ENCODE measurements at regions of chr7 and their contacts with region 1.

Region 1: GRCh38 chr7:141533149-141533949 is 17.9 kb upstream of the AGK start:
- DNase-seq: peak; percentile 38
- H3K4me3 ChIP-seq: no peak overlapping the region
- H3K27ac ChIP-seq: no peak overlapping the region
- H3K4me1 ChIP-seq: no peaks in the 10 kb centered on the region
- H3K27me3 ChIP-seq: no peaks in the 10 kb centered on the region
- CTCF ChIP-seq: peak; percentile 94 to 99

Region 2: GRCh38 chr7:140673063-140673773 is 860.1 kb before region 1 on chr7:
- CTCF ChIA-PET with region 1: no interaction called
- dilution Hi-C with region 1: no loop called
- in situ Hi-C with region 1: no loop called
- intact Hi-C with region 1: loop called (anchors 5 kb)
- DNase-seq: peak; percentile 56
- H3K4me3 ChIP-seq: peak overlapping the region; percentile 53 to 69 (median 64)
- H3K27ac ChIP-seq: no peak overlapping the region
- H3K4me1 ChIP-seq: peaks cover 26% of the 10 kb centered on the region
- H3K27me3 ChIP-seq: no peaks in the 10 kb centered on the region
- CTCF ChIP-seq: peak in 1 of 2 donors; percentile 3

Region 3: DNA sequence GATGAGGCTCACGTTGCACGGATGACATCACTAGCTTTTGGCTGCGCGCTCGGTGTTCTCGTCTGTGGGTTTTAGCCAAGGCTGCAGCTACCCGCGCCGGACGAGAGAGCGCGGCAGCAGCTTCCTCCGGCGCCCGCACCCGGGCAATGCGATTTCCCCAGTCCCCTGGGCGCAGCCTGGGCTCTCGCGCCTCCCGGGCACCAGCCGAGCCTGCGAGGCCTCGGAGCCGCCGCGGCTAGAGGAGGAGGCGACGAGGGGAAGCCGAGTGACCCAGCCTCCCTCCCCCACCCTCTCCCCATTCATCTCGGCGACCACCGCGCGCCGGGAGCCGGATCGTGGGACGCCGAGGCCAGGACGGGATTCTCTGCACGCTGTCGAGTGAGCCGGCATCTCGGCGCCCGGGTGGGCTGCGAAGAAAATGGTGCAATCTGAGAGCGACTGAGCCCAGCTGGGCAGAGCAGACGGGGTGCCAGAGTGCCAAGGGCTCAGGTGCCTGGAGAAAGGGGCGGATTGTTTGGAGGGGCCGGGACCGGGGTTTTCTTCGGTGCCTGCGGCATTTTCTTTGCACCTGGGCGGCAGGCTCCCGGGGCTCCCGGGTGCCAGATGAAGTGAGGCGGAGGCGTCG is 460.7 kb before region 1 on chr7:
- CTCF ChIA-PET with region 1: no interaction called
- dilution Hi-C with region 1: no loop called
- in situ Hi-C with region 1: no loop called
- intact Hi-C with region 1: loop called (anchors 2 kb)
- DNase-seq: peak; percentile 53
- H3K4me3 ChIP-seq: peak overlapping the region; percentile 28 to 46 (median 43)
- H3K27ac ChIP-seq: no peak overlapping the region
- H3K4me1 ChIP-seq: peaks cover 24% of the 10 kb centered on the region
- H3K27me3 ChIP-seq: peaks cover 44% of the 10 kb centered on the region
- CTCF ChIP-seq: no peak

Region 4: DNA sequence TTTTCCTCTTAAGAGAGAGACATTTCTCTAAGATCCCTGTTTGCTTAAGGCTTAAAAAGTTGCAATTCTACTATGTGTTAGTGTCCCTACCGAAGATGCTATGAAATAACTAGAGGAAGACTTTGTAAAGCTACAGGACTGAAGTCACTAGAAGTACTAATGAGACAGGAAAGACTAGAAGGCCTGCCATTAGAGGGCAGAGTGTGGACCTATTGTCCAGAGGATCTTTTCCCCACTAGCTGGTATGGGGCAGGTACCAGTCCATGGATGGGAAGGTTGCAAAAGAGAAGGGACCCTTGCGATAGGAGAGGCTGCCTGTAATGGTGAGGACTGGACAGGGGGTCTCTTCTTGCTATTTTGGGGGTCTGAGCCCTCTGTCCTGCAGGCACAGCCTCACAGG is 281.4 kb before region 1 on chr7:
- CTCF ChIA-PET with region 1: no interaction called
- dilution Hi-C with region 1: no loop called
- in situ Hi-C with region 1: no loop called
- intact Hi-C with region 1: loop called (anchors 1 kb)
- DNase-seq: no peak
- H3K4me3 ChIP-seq: no peak overlapping the region
- H3K27ac ChIP-seq: no peak overlapping the region
- H3K4me1 ChIP-seq: no peaks in the 10 kb centered on the region
- H3K27me3 ChIP-seq: peaks cover 3% of the 10 kb centered on the region
- CTCF ChIP-seq: peak in 1 of 2 donors; percentile 21

Region 5: GRCh38 chr7:141558544-141559183 is 25.3 kb after region 1 on chr7:
- CTCF ChIA-PET with region 1: no interaction called
- dilution Hi-C with region 1: no loop called
- in situ Hi-C with region 1: no loop called
- intact Hi-C with region 1: no loop called
- DNase-seq: peak; percentile 81
- H3K4me3 ChIP-seq: no peak overlapping the region
- H3K27ac ChIP-seq: no peak overlapping the region
- H3K4me1 ChIP-seq: peaks cover 14% of the 10 kb centered on the region
- H3K27me3 ChIP-seq: no peaks in the 10 kb centered on the region
- CTCF ChIP-seq: no peak

Region 6: GRCh38 chr7:141641876-141642275 is 108.5 kb after region 1 on chr7:
- CTCF ChIA-PET with region 1: no interaction called
- dilution Hi-C with region 1: loop called (anchors 5 kb)
- in situ Hi-C with region 1: no loop called
- intact Hi-C with region 1: no loop called
- DNase-seq: no peak
- H3K4me3 ChIP-seq: no peak overlapping the region
- H3K27ac ChIP-seq: no peak overlapping the region
- H3K4me1 ChIP-seq: no peaks in the 10 kb centered on the region
- H3K27me3 ChIP-seq: no peaks in the 10 kb centered on the region
- CTCF ChIP-seq: peak in 1 of 2 donors; percentile 30